ENCODE measurements at regions of chr7 and their contacts with region 1.

Region 1: DNA sequence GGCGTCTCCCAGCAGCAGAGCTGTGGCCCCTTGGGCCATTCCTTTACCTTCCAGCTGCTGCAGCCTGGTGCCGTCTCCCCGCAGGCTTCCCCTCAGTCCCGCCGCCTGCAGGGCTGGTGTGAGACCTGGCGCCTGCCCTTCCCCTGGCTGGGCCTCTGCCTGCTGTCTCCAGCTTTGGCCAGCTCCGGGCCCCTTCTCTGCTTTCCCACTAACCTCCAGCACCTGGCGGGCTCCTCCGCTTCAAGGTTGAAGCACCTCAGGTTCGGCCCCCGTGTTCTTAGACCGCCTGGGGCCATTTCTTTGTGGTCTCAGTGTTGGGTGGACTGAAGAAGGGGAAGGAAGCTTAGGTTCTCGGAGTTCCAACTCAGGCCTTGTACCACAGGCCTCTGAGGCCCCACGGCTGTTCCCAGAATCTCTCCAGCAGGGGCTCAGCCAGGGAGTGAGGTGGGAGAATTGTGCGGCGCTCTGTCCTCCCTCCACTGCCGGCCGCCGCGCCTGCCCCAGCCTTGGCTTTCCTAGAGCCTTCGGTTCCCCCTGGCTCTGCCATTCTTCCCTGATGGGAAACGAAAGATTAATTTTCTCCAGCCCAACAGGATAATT is 30.3 kb downstream of the GBX1 start:
- DNase-seq: no peak
- ATAC-seq: no peak
- H3K4me3 ChIP-seq: no peak overlapping the region
- H3K27ac ChIP-seq: no peak overlapping the region
- H3K4me1 ChIP-seq: no peaks in the 10 kb centered on the region
- CTCF ChIP-seq: no peak
- EP300 ChIP-seq: no peak
- POLR2A ChIP-seq: no peak
- RAD21 ChIP-seq: no peak

Region 2: DNA sequence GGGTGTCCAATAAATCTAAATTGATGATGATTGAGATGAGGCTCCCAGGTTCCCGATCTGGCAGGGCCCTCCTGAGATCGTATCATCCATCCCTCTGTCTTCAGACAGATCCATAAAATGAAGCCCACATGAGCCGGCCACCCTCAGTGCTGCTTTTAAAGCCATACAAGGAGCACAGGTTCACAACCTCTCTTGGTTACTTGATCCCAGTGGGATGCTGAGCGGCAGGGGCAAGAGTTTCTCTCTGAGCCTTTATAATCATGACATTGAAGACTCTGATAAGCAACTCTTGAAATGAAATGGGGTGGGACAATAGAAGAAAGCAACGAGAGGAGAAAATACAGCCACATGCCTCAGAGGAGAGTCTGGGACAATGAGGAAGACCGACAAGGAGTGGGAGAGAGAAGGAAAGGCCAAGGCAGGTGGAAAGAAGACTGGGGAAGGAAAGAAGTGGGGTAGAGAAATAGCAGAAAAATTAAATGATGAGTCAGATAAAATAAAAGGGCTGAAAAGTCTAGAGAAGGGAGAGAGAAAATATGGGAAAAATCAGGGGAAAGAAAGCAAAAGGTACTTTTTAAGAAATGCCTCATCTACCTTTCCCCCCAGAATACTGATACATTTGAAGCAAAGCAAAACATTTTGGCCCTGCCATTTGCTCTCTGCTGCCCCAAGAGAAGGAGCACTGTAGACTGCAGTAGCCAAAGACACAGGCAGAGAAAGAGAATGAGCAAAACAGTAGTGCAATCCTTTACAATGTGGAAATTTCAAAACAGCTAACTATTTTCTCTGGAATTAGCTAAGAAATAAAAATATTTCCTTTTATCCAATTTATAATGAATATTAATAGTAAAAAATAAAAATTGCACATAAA is 15.7 kb after region 1 on chr7:
- CTCF ChIA-PET with region 1: interaction called, 10 read pairs
- POLR2A ChIA-PET with region 1: no interaction called
- DNase-seq: no peak
- ATAC-seq: peak; percentile 49; a peak in 2 of 6 replicates
- H3K4me3 ChIP-seq: no peak overlapping the region
- H3K27ac ChIP-seq: no peak overlapping the region
- H3K4me1 ChIP-seq: peaks cover 7% of the 10 kb centered on the region; the same call in 2 of the 3 replicates
- CTCF ChIP-seq: no peak
- EP300 ChIP-seq: no peak
- POLR2A ChIP-seq: no peak
- RAD21 ChIP-seq: no peak

Region 3: DNA sequence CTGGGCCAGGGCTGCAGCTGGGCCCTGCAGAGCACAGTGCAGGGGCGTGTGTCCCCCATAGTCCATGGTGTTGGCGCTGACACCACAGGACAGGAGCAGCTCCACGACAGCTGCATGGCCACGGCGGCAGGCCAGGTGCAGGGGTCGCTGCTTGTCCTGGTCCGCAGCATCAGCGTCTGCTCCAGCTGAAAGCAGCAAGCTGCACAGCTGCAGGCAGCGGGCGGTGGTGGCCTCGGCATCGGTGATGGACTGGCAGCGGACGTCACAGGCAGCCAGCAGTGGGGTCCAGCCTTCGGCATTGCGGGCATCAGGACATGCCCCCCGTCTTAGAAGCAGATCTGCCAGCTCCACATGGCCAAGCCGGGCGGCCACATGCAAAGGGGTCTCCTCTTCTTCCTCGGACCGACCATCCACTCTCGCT is 43.8 kb after region 1 on chr7:
- CTCF ChIA-PET with region 1: no interaction called
- POLR2A ChIA-PET with region 1: no interaction called
- DNase-seq: no peak
- ATAC-seq: no peak
- H3K4me3 ChIP-seq: no peak overlapping the region
- H3K27ac ChIP-seq: no peak overlapping the region
- H3K4me1 ChIP-seq: no peaks in the 10 kb centered on the region
- CTCF ChIP-seq: no peak
- EP300 ChIP-seq: no peak
- POLR2A ChIP-seq: no peak
- RAD21 ChIP-seq: no peak